Gastrocnemius medialis (tissue), 4 donors: ENCODE measurements at regions of chr10 and their contacts with region 1.

Region 1: DNA sequence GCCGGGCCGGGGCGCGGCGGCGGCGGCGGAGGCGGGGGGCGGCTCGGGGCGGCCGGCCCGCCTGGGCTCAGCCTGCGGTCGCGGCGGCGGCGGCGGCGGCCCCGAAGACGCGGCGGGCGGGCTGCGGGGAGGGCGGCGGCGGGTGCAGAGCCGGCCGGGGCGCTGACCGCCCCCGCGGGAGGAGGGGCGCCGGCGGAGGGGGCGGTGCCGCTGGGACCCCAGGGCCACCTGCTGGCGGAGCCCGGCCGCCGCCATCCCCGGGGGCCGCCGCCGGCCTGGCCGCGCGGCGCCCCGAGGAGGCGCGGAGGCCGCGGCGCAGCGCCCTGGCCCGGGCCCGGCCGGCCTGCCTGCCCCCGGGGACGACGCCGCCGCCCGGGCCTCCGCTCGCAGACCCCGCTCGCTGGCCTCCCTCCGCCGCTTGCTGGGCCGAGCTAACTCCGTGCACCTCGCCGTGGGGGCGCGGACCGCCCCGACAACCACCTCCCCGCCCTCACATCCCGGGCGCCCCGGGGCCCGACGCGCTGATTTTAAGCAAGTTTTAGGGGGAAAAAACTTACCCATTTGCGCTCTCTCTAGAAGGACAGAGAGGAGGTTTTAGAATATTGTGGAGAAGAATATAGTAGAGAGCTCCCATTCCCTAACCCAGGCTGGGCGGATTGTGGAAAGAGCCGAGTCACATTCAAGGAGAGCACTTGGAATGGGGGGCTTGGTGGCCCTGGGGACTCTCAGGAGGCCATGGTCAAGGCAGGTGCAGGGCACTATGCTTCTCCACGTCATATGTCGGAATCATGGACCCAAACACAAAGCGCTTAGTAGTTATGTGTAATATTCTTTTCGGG is at the start of gene BEND7:
- DNase-seq: no peak
- ATAC-seq: peak; percentile 76 to 78
- H3K4me3 ChIP-seq: peak within 1 kb of the TSS; percentile 64 to 76 (median 68)
- H3K27ac ChIP-seq: peak within 1 kb of the TSS; percentile 63 to 81 (median 74)
- H3K4me1 ChIP-seq: peaks cover 13 to 15% of the 10 kb centered on the region in 2 donors
- H3K27me3 ChIP-seq: no peaks in the 10 kb centered on the region
- CTCF ChIP-seq: no peak
- POLR2A ChIP-seq: no peak
- total RNA-seq, gene BEND7: 23.6 to 35.5 (median 26.1) TPM

Region 2: GRCh38 chr10:13348216-13349017 is 180.7 kb before region 1 on chr10 and contains the start of gene SEPHS1:
- in situ Hi-C with region 1: loop called in 1 of 4 experiments (anchors 25 kb)
- intact Hi-C with region 1: loop called (anchors 5 kb)
- DNase-seq: peak; percentile 76 to 88
- ATAC-seq: peak; percentile 81 to 83
- H3K4me3 ChIP-seq: peak within 1 kb of the TSS; percentile 72 to 88 (median 83)
- H3K27ac ChIP-seq: peak within 1 kb of the TSS; percentile 85 to 97 (median 94)
- H3K4me1 ChIP-seq: peaks cover 24 to 25% of the 10 kb centered on the region in 2 donors
- H3K27me3 ChIP-seq: peaks cover 0 to 13% (median 10%) of the 10 kb centered on the region in 3 donors
- CTCF ChIP-seq: peak in 1 of 5 experiments; percentile 31
- POLR2A ChIP-seq: no peak
- total RNA-seq, gene SEPHS1: 22.4 to 29.7 (median 27.9) TPM

Region 3: DNA sequence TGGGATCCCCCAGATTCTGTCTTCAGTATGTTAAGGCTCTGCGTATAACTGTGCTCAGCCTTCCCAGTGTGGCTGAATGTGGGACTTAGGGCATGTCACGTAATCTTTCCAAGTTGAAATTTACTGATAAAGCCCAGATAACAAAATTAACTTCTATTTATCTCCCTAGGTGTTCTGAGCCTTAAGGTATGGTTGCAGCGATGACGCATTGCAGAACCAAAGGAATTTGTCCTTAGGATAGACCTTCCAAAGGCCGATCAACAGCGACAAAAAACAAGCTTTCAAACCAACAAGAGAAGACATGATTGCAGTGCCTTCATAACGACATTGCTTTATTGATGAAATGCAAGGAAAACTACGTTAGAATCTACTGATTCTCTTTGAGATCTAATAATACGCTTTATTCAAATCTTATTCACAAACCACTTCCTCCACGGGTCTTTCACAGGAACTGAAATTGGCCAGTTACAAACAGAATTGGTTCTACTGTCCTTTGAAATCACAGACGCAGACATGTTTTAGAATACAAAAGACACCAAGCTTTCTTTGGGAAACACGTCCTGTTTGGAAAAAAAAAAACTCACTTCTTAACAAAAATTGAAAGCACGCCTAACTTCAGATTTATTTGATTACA is 106.4 kb before region 1 on chr10:
- in situ Hi-C with region 1: no loop called
- intact Hi-C with region 1: no loop called
- DNase-seq: no peak
- ATAC-seq: no peak
- H3K4me3 ChIP-seq: no peak overlapping the region
- H3K27ac ChIP-seq: no peak overlapping the region
- H3K4me1 ChIP-seq: no peaks in the 10 kb centered on the region
- H3K27me3 ChIP-seq: no peaks in the 10 kb centered on the region
- CTCF ChIP-seq: no peak
- POLR2A ChIP-seq: no peak

Region 4: DNA sequence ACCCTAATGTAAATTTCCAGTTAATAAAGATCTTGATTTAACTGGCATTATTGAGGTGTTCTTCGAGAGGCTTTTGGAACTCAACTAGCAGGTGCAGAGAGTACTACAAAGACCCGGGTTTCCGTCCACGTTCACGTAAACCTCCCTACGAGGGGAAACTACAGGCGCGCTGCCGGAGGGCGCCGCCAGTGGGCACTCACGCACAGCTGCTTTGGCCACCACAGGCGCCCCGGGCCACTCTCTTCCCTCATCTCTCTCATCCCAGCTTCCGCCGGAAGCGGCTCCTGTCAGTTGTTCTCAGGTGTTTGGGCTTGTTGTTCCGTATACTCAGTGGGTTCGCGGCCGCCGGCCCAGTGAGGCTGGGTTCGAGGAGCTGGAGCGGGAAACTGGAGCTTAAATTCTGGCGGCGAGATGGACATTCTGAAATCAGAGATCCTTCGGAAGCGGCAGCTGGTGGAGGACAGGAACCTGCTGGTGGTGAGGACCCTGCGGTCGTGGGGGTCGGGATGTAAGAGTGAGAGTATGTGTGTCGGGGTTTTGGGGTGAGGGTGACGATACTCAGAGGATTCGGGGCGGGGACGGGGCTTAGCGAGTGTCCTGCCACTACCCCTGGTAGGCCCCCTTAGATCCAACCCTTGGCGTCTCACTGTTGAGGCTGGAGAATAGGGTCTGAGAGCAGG is 57.7 kb after region 1 on chr10 and contains the start of gene PRPF18:
- in situ Hi-C with region 1: no loop called
- intact Hi-C with region 1: loop called (anchors 2 kb)
- DNase-seq: peak; percentile 86 to 92
- ATAC-seq: peak; percentile 99 to 100
- H3K4me3 ChIP-seq: peak within 1 kb of the TSS; percentile 85 to 95 (median 91)
- H3K27ac ChIP-seq: peak within 1 kb of the TSS; percentile 77 to 88 (median 82)
- H3K4me1 ChIP-seq: peaks cover 20 to 25% of the 10 kb centered on the region in 2 donors
- H3K27me3 ChIP-seq: peaks cover 0 to 5% (median 0%) of the 10 kb centered on the region in 3 donors
- CTCF ChIP-seq: peak; percentile 88 to 98 (median 95)
- POLR2A ChIP-seq: peak; percentile 31 to 55
- total RNA-seq, gene PRPF18: 21.3 to 35.4 (median 28.1) TPM